ENCODE measurements at regions of chr3 and their contacts with region 1.

Region 1: GRCh38 chr3:187714404-187714979 is 12.1 kb upstream of the RTP2 start:
- DNase-seq: peak; percentile 76
- H3K4me3 ChIP-seq: no peak overlapping the region
- H3K27ac ChIP-seq: no peak overlapping the region
- H3K4me1 ChIP-seq: no peaks in the 10 kb centered on the region
- H3K27me3 ChIP-seq: no peaks in the 10 kb centered on the region
- CTCF ChIP-seq: peak; percentile 91

Region 2: GRCh38 chr3:187215460-187215859 is 499.0 kb before region 1 on chr3:
- intact Hi-C with region 1: loop called (anchors 5 kb)
- DNase-seq: no peak
- H3K4me3 ChIP-seq: no peak overlapping the region
- H3K27ac ChIP-seq: no peak overlapping the region
- H3K4me1 ChIP-seq: no peaks in the 10 kb centered on the region
- H3K27me3 ChIP-seq: no peaks in the 10 kb centered on the region
- CTCF ChIP-seq: no peak

Region 3: DNA sequence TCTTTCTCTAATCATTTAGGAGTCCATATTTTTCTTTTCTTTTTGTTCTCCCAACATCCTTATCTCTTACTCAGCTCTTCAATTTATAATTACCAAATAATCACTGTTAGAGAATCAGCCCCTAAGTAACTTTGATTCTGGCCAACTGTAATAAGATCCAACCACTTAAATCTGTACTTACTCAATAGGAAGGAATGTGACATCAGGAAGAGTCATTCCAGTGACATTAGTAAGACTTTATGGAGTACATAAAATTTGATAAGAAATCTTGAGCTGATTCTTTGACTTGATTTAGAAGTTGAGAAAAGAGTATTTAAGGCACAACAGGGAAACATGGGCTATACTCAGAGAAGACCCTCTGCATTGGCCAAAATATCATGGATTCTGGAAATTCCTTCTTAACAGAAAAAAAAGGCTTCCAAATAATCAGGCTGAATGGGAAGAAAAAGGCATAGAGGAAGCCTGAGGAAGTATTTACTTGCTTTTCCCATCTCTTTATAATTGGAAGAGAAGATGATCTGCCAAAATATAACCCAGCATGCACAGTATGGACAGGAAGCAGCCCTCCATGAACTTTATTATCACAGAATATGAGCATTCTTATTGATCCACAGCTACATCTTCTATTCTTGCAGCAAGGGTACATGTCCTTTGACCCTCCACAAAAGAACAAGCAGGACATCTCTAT is 1167.6 kb after region 1 on chr3:
- intact Hi-C with region 1: no loop called
- DNase-seq: no peak
- H3K4me3 ChIP-seq: no peak overlapping the region
- H3K27ac ChIP-seq: no peak overlapping the region
- H3K4me1 ChIP-seq: no peaks in the 10 kb centered on the region
- H3K27me3 ChIP-seq: no peaks in the 10 kb centered on the region
- CTCF ChIP-seq: no peak

Measured in colonic mucosa (tissue), 4 donors.